Posterior cingulate gyrus (tissue), 11 donors: ENCODE measurements at regions of chr17 and their contacts with region 1.

Region 1: DNA sequence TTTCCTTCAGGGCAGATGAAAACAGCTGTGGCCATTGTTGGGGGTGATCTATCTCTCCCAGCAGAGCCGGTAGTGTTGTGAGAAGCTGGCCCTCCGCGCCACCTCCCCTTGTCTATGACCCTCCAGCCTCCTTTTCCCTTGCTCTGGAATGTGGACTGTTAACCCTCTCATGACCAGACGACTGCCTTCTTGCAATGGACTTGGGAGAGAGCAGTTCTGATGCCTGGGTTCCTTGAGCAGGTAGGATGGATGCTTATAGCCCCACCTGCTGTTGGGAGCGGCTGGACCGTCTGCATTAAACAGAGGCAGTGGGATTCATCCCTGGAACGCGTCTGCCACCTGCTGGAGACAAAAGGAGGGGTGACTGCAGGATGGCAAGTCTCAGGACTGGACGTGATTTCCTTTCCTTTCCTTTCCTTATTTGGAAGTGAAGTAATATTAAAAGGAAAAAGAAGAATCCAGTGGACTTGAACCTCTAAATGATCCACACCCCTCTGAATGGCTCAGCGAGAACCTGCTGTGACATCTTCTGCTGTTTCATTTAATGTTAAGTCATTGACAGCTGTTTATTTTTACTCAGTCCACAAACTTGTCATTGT is 1.8 kb upstream of the SOST start:
- DNase-seq: peak; percentile 84 to 99 (median 95)

Region 2: DNA sequence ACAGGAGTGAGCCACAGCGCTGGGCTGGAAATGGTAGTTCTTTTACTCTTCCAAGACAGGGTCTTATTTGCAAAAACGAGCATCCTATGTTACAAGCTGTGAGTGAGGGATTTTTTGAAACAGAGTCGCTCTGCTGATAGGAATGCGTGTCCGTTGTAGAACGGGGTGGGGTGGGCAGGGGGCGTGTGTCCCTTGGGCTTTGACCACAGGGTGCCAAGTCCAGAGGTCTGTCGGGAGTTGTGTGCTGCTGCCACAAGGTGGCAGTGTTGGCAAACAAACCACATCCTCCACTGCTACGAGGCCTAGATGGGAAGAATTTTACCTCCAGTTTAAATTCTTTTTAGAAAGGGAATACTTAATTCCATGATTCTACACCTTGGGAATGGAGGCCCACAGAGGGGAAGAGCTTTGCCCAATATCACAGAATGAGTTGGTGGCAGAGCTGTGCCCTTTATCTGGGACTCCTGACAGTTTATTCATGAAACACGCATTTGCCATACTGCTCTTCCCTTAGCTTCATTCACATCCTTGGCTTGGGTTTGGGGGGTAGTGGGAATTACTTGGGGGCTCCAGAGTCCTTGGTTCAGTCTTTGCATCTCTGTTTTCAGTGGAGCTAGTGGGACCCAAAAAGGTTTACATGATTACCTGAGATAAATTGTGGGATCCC is 183.7 kb before region 1 on chr17:
- intact Hi-C with region 1: loop called (anchors 5 kb)
- DNase-seq: peak; percentile 40 to 95 (median 74)

Region 3: GRCh38 chr17:43634591-43635125 is 125.7 kb before region 1 on chr17:
- intact Hi-C with region 1: no loop called
- DNase-seq: peak in 3 of 10 donors; percentile 7 to 52 (median 52)

Region 4: DNA sequence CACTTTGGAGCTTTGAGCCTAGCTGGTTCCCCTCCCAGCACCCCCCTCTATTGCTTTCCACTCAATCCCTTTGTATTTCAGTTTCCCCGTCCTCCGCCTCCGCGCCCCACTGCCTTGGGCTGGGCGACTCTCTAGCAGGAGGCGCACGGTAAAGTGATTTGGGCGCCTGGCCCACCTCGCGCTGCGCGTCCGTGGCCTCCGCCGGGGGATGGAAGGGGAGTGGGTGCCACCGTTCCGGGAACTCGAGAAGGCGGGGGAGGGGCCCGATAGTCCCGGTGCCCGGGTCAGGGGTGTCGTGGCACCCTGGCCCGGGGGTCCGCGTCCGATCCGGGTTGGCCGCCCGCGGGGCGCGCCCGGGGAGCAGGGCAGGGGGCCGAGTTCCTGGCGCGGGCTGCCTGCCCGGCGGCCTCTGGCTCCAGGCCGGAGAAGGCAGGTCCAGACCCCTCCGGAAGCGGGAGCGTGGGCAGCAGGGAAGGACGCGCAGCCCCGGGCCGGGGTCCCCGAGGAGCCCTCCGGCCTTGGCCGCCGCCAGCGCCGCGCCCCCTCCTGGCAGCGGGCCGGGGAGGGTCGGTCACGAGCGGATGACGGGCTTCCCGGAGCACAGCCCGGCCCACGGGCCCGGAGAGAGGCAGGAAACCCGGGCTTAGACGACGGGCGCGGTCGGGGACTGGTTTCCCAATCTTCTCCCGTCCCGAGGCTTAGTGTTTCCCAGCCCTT is 114.4 kb before region 1 on chr17:
- intact Hi-C with region 1: no loop called
- DNase-seq: peak in 3 of 10 donors; percentile 43 to 77 (median 58)

Region 5: GRCh38 chr17:43694077-43694870 is 66.1 kb before region 1 on chr17:
- intact Hi-C with region 1: loop called (anchors 1 kb)
- DNase-seq: peak; percentile 35 to 96 (median 76)